ENCODE measurements at regions of chr17 and their contacts with region 1.

Region 1: GRCh38 chr17:12744298-12744697 is 45.0 kb upstream of the ARHGAP44 start:
- DNase-seq: no peak
- ATAC-seq: no peak
- H3K4me3 Mint-ChIP-seq: no peak overlapping the region
- H3K27ac Mint-ChIP-seq: no peak overlapping the region
- H3K4me1 Mint-ChIP-seq: no peaks in the 10 kb centered on the region
- H3K27me3 Mint-ChIP-seq: peaks cover 4% of the 10 kb centered on the region
- CTCF ChIP-seq: no peak

Region 2: DNA sequence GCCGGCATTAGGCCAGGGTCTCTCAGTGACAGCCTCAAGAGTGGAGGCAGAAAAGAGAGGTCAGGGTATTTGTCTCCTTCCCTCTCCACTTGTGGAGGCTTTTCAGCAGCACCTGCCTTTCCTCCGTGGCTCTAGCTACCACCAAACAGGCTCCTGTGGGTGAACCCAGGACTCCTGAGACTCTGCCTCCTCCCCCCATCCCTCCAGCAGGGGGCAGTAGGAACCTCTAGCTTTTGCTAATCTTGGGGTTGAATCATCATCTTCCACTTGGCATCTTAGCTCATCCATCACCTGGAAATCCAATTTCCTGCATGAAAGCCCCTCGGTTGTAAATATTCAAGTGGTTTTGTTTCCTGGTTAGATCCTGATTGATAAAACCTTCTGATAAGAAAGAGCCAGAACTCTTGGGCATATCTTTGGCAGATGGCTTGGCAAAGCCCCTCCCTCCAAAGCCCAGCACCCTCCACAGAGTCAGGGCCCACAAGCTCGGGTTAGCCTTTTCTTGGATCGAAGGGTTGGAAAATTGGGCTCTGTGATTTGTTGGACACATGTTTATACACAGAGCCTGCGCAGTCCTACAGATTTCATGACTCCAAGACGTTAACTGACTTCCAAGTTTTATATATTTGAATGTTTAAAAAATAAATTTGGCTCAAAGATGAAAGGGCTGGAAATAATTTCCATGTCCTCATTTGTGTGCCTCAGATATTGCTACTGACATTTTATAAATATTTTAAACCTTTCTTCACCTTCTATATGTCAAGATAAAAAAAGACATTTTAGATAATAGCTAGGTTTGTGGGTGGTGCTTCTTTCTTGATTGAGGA is 401.5 kb before region 1 on chr17:
- CTCF ChIA-PET with region 1: no interaction called
- POLR2A ChIA-PET with region 1: no interaction called
- intact Hi-C with region 1: loop called (anchors 1 kb)
- DNase-seq: no peak
- ATAC-seq: peak; percentile 37
- H3K4me3 Mint-ChIP-seq: no peak overlapping the region
- H3K27ac Mint-ChIP-seq: no peak overlapping the region
- H3K4me1 Mint-ChIP-seq: no peaks in the 10 kb centered on the region
- H3K27me3 Mint-ChIP-seq: no peaks in the 10 kb centered on the region
- CTCF ChIP-seq: no peak

Region 3: DNA sequence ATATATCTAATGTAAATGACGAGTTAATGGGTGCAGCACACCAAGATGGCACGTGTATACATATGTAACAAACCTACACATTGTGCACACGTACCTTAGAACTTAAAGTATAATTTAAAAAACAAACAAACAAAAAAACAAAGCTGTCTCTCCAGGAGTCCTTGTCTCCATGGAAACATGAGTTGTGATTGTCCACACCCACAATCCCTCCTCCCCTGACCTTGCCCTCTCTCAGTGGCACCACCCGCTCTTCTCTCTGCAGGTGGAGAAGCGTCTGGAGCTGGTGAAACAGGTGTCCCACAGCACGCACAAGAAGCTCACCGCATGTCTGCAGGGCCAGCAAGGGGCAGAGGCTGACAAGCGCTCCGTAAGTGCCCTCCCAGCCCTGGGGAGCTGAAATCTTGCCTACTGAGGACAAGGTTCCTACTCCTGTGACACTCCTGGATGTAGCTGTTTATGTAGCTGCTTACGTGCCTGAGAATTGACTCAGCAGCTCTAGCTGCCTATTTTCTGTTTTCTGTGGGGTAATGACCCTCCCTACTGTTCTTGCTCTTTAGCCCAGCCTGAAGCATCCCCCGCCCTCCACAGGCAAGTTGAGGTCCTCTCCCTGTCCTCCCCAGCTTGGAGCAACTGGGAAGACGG is 152.0 kb after region 1 on chr17:
- CTCF ChIA-PET with region 1: no interaction called
- POLR2A ChIA-PET with region 1: no interaction called
- intact Hi-C with region 1: no loop called
- DNase-seq: no peak
- ATAC-seq: no peak
- H3K4me3 Mint-ChIP-seq: no peak overlapping the region
- H3K27ac Mint-ChIP-seq: no peak overlapping the region
- H3K4me1 Mint-ChIP-seq: no peaks in the 10 kb centered on the region
- H3K27me3 Mint-ChIP-seq: no peaks in the 10 kb centered on the region
- CTCF ChIP-seq: no peak

Measured in activated B cell treated with CpG ODN at 0.5 μM for 24 hours (primary cell).